Aorta (tissue), 5 donors: ENCODE measurements at regions of chr1 and their contacts with region 1.

Region 1: DNA sequence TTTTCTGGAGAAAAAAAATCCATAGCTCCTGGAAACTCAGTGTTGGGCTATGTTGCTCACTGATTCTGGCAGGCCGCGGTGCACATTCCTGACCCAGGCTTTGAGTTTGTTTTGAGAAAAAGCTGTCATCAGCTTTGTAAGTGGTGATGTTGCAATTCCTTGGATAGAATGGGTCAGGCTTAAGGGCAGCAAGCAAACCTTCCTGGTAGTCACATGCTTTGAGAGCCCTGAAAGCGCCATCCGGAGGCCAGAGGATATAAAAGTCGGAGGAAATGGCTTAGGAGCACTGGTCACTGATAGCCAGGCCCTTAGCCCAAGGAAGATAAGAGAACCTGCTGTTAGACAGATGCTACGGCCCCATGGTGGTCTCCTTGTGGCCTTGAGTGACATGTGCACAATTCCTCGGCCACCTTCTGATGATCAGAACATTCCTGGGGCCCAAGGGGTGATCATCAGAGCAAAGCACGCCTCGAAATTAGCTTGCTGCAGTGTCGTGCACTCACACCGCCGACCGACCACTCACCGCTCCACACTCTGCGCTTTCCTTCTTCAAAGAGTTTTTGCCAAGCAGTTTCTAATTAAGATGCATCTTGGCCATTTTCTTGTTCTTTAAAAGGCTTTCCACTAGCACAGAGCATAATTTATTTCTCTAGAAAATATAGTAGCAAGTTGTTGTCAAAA is 78.6 kb downstream of the MAN1C1 start:
- DNase-seq: peak; percentile 92 to 93
- ATAC-seq: peak; percentile 92
- H3K4me3 ChIP-seq: no peak overlapping the region
- H3K27ac ChIP-seq: peak overlapping the region in 1 of 2 donors; percentile 87
- H3K4me1 ChIP-seq: peaks cover 3 to 4% of the 10 kb centered on the region in 2 donors
- H3K27me3 ChIP-seq: no peaks in the 10 kb centered on the region

Region 2: GRCh38 chr1:25743826-25744581 is 48.8 kb after region 1 on chr1:
- intact Hi-C with region 1: loop called (anchors 5 kb)
- DNase-seq: peak; percentile 72 to 77
- ATAC-seq: peak; percentile 80
- H3K4me3 ChIP-seq: no peak overlapping the region
- H3K27ac ChIP-seq: peak overlapping the region; percentile 8 to 95
- H3K4me1 ChIP-seq: no peaks in the 10 kb centered on the region
- H3K27me3 ChIP-seq: no peaks in the 10 kb centered on the region

Region 3: DNA sequence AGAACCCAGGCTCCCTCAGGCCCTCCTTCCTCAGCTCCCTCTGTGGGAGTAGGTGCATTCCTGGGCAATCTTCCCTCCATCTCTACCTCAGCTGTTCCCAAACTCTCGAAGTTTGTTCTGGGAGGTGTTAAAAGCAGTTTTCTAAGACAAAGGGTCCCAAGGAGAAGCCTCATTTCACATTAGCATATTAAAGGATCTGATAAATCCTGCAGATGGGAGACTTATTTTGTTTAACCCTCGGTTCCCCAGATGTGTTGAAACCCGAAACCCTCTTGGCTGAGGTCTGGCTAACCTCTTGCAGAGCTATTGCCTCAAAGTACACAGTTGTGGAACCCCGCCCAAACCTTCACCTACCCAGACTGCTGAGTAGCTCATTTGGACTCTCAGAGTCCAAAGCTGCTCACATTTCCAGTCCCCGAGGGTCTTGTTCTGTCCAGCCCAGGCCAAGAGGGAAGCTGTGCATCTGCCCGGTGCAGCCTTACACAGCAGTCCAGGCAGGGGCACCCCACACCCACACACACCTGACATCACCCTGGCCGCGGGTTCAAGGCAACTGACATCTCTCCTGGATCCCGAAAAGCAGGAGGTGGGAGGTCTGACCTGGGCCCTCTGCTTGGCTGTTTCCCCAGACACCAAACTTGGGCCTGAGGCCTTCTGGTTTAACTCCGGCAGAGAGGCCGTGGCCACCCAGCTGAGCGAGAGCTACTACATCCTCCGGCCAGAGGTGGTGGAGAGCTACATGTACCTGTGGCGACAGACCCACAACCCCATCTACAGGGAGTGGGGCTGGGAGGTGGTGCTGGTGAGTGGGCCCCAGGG is 85.3 kb after region 1 on chr1:
- intact Hi-C with region 1: loop called in 1 of 2 experiments (anchors 10 kb)
- DNase-seq: no peak
- ATAC-seq: no peak
- H3K4me3 ChIP-seq: no peak overlapping the region
- H3K27ac ChIP-seq: no peak overlapping the region
- H3K4me1 ChIP-seq: no peaks in the 10 kb centered on the region
- H3K27me3 ChIP-seq: no peaks in the 10 kb centered on the region